Activated CD4-positive, alpha-beta T cell treated with anti-CD3 and anti-CD28 coated beads, Interleukin-2, amount 10 ng/mL, durations not matched to agents 24 days and 14 days (primary cell): ENCODE measurements at regions of chr3 and their contacts with region 1.

Region 1: DNA sequence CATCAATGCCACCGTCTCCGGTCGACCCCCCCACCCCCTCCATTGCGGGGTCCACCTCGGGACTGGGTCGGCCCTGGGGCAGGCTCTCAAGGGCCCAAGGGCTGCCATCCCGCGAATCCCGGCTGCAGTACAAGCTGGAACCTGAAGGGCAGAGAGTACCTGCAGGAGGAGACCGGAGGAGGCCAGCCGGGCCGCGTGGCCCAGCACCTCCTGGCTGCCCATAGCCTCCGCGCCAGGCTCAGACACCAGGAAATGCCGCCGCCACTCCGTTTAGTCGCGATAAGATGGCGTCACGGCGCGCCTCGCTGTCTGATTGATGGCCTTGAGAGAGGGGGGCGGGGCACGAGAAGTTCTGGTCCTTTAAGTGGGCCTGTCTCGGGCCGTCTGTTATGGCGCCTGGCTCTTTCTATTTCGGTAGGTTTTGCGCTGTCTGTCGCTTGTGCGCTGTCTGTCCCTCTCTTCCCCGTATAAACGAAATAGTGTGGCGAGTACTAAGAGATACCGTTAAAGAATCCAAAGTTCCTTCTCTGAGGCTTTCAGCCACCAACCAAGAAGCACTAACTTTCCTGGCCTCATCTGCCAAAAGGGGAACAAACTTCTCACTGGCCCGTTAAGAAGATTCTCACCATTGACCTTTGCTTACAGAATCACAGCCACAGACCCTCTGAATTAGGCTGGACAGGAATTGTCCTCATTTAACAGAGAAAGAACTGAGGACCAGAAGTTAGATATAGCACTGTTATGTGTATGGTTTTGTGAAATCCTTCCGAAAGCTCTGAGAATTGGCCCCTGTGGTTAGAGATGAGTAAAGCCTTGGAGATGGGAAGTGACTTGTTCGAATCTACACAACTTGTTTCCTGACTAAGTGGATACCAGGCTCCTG is at the start of gene RFT1:
- DNase-seq: peak; percentile 100
- H3K4me3 Mint-ChIP-seq: peak within 1 kb of the TSS; percentile 89
- H3K27ac Mint-ChIP-seq: peak within 1 kb of the TSS; percentile 93
- H3K4me1 Mint-ChIP-seq: peaks cover 15% of the 10 kb centered on the region
- H3K27me3 Mint-ChIP-seq: no peaks in the 10 kb centered on the region
- total RNA-seq, gene RFT1: 47.4 and 47.6 TPM in 2 replicates

Region 2: DNA sequence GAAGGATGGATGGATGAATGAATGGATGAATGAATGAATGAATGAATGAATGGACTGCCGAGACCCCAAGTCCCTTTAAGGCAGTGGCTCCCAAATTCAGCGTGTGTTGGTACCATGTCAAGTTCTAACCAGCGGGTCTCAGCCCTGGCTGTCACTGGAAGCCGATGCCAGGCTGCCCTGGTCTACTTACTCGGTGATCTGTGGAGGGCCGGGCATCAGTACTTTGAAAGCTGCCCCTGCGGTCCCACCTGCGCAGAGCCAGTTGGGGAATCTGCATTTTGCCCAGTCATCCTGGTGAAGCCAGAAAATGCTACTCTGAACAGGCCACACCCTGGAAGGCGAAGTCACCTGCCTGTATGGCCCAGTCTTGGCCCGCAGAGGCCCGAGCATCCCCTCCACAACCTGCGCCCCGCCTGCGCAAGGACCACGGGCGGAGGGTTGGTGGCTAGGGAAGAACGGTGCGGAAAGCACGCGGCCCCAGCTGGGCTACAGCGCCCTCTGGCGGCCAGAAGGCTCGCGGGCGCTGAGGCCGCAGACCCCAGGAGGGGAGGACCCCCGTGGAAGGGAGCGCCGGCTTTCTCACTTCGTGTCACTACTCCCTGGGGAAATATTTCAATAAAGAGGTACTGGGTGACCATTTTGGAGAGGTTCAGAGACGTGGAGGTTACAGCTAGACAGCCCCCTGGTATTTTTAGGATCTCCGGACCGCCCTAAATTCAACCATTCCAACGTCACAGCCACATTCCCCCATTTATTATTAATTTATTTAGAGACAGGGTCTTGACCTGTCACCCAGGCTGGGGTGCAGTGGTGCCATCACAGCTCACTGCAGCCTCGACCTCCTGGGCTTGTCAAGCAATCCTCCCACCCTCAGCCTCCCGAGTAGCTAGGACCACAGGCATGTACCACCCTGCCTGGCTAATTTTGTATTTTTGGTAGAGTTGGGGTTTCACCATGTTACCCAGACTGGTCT is 65.5 kb after region 1 on chr3:
- intact Hi-C with region 1: loop called (anchors 1 kb)
- DNase-seq: peak; percentile 89
- H3K4me3 Mint-ChIP-seq: no peak overlapping the region
- H3K27ac Mint-ChIP-seq: peak overlapping the region; percentile 30
- H3K4me1 Mint-ChIP-seq: peaks cover 6% of the 10 kb centered on the region
- H3K27me3 Mint-ChIP-seq: no peaks in the 10 kb centered on the region

Region 3: GRCh38 chr3:53255775-53256703 is 125.6 kb after region 1 on chr3 and contains the start of gene TKT:
- intact Hi-C with region 1: loop called (anchors 1 kb)
- DNase-seq: peak; percentile 95
- H3K4me3 Mint-ChIP-seq: peak within 1 kb of the TSS; percentile 98
- H3K27ac Mint-ChIP-seq: peak within 1 kb of the TSS; percentile 93
- H3K4me1 Mint-ChIP-seq: peaks cover 30% of the 10 kb centered on the region
- H3K27me3 Mint-ChIP-seq: peaks cover 2% of the 10 kb centered on the region
- total RNA-seq, gene TKT: 377 and 379 TPM in 2 replicates